ENCODE measurements at regions of chr1 and their contacts with region 1.

Region 1: DNA sequence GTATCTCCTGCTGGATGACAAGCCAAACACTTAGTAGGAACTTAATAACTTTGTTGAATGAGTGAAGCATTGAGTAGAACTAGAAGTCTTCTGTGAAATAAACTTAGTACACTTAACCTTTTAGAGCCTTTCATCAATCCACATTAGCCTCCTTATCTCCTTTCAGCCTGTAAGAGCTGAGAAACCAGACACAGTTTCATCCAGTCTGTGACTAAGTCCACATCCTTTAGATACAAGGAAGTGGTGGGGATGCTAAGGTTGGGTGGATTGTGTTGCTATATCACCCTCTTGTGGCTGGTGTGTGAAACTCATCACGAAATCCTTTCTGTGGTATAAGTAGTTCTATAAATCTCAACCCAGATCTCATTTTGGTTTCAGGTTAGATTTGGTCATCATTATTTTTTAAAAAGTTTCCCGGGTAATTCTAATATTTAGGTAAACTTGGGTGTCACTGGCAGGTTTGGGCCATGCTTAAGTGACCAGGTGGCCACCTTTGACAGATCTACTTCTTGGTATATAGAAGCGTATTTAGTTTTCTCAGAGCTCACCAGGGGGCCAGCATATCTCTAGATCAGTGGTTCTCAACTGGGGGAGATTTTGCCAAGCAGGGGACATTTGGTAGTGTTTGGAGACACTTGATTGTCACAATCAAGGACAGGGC is 27.8 kb upstream of the CD84 start:
- DNase-seq: peak; percentile 62
- H3K4me3 Mint-ChIP-seq: peak overlapping the region; percentile 55
- H3K27ac Mint-ChIP-seq: peak overlapping the region; percentile 60
- H3K4me1 Mint-ChIP-seq: peaks cover 51% of the 10 kb centered on the region
- H3K27me3 Mint-ChIP-seq: no peaks in the 10 kb centered on the region

Region 2: GRCh38 chr1:160428655-160429054 is 178.5 kb before region 1 on chr1:
- intact Hi-C with region 1: loop called (anchors 1 kb)
- DNase-seq: no peak
- H3K4me3 Mint-ChIP-seq: no peak overlapping the region
- H3K27ac Mint-ChIP-seq: peak overlapping the region; percentile 73
- H3K4me1 Mint-ChIP-seq: peaks cover 46% of the 10 kb centered on the region
- H3K27me3 Mint-ChIP-seq: no peaks in the 10 kb centered on the region

Region 3: GRCh38 chr1:160539990-160540858 is 66.9 kb before region 1 on chr1:
- intact Hi-C with region 1: loop called (anchors 1 kb)
- DNase-seq: peak; percentile 66
- H3K4me3 Mint-ChIP-seq: peak overlapping the region; percentile 56
- H3K27ac Mint-ChIP-seq: peak overlapping the region; percentile 83
- H3K4me1 Mint-ChIP-seq: peaks cover 48% of the 10 kb centered on the region
- H3K27me3 Mint-ChIP-seq: no peaks in the 10 kb centered on the region

Region 4: DNA sequence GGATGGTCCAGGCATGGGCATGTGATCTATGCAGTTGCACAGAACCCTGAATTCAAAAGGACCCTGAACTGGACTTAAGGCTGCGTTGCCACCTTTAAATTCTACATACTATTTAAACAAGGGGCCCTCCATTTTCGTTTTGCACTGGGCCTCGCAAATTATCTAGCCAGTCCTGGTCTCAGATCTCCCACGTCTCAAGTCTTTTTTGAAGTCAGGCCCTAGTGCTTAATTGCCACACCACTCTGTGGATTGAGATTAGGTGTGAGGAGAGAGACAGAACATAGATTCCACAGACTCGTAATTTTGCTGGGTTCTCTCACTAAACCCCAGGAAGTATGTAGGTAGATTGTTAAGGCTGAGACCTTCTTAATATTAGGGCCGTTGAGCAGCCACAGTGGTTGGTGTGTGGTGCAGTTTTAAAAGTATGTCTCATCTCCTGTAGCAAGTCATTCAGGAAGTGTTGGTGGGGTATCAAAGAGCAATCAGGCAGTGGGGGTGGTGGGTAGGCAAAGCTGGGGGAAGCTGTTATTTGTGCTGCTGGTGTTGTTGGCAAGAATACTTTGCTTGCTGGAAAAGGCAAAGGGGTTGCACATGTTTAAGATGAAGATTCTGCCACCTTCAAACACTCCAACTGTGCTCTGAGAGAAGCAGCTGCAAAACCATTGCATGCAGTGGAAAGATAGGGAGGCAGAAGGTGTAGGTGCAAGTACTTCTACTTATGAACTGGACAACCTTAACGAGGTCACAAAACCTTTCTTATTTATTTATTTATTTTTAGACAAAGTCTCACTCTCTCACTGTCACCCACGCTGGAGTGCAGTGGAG is 39.1 kb before region 1 on chr1:
- intact Hi-C with region 1: loop called (anchors 5 kb)
- DNase-seq: peak; percentile 59
- H3K4me3 Mint-ChIP-seq: peak overlapping the region; percentile 76
- H3K27ac Mint-ChIP-seq: peak overlapping the region; percentile 98
- H3K4me1 Mint-ChIP-seq: peaks cover 72% of the 10 kb centered on the region
- H3K27me3 Mint-ChIP-seq: no peaks in the 10 kb centered on the region

Region 5: DNA sequence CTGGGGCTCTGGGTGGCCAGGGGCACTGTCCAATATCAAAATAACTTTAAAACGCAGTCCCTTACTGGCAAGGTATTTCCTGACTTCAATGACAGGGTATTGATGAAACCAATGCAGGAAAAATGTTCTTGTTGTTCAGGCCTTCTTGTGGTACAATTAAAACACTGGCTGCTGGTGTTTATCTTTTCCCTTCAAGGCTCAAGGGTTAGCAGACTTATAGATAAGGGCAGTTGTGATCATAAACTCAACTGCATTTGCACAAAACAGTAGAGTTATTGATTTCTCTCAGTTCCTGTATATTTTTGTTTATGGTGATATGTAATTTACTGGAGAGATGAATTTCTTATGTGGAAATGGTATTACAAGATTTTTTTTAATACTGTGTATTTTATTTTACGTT is 25.2 kb before region 1 on chr1:
- intact Hi-C with region 1: loop called (anchors 1 kb)
- DNase-seq: no peak
- H3K4me3 Mint-ChIP-seq: no peak overlapping the region
- H3K27ac Mint-ChIP-seq: no peak overlapping the region
- H3K4me1 Mint-ChIP-seq: peaks cover 59% of the 10 kb centered on the region
- H3K27me3 Mint-ChIP-seq: no peaks in the 10 kb centered on the region

Measured in activated T-helper 2 cell treated with anti-CD3 and anti-CD28 coated beads, Interferon-gamma antibody, Interleukin-2, Interleukin-4, amounts not matched to agents 10 μg/mL and 5 μg/mL and 100 μg/mL, durations not matched to agents 14 hours and 24 hours and 36 hours (primary cell).